ENCODE measurements at regions of chr7 and their contacts with region 1.

Region 1: DNA sequence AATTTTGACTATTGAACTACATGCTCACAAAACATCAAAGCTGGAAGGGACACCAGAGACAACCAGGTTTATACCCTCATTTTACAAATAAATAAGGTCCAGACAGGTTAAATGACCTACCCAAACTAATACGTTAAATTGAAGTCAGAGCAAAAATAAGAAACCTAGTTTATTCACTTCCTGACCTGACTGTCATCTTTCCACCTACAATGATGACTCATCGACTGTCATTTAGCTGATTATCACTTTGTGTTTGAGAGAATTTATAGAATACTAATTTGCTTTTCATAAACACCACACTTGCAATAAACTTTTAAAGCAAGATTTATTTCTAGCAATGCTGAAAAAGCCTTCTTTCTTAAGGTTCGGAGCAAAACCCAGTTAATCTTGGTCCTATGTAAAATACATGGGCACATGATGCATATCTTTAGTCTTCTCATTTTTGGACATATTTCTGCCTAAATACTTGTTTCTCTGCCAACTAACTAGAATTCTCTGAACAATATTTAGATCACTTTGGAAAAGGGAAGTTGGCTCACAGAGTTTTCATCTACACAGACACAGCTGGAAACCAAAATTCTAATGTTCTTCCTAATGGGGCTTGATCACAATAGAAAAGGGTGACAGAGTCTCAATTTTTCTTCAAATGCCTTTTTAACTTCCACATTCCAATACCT is 16.7 kb upstream of the LRRN3 start:
- DNase-seq: no peak

Region 2: GRCh38 chr7:111045449-111045848 is 28.8 kb before region 1 on chr7:
- CTCF ChIA-PET with region 1: no interaction called
- POLR2A ChIA-PET with region 1: no interaction called
- DNase-seq: no peak

Region 3: DNA sequence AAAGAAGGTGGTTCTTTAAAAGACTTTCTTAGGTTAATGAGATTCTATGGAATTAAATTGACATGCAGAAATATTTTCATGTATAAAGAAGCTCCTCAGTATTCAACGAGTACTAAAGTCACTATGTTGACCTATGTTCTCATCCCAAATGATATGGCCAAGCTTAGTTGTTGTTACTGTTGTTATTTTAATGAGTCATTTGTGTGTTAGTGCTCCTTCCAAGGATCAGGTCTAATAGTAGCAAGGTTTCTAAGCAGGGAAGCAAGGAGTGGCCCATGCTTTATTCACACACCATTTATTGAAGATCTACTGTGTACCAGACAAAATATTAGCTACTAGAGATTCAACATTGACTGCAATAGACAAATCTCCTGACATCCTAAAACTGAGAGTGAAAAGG is 58.6 kb after region 1 on chr7:
- CTCF ChIA-PET with region 1: interaction called, 10 read pairs
- POLR2A ChIA-PET with region 1: no interaction called
- DNase-seq: no peak

Region 4: DNA sequence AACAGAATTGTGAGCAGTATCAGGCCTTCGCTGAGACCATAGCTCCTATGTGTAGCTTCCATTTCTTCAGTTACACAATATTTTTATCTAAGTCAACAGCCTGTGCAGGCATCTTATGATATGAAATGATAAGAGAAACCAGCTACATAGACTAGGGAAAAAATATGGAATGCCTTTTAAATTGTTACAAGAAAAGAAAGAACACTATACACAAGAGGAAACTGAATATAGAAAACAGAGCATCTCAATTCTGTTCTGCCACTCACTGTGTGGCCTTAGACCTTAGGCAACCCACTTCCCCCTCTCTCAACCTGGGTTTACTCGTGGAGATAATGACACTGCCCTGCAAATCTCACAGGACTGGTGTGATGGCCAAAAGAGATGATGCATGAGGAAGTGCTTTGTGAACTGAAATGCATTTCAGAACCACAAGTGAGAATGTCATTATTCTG is 149.6 kb after region 1 on chr7:
- CTCF ChIA-PET with region 1: no interaction called
- POLR2A ChIA-PET with region 1: no interaction called
- DNase-seq: no peak

Measured in HEK293T (cell line).